CD14-positive monocyte (primary cell): ENCODE measurements at regions of chr7 and their contacts with region 1.

Region 1: DNA sequence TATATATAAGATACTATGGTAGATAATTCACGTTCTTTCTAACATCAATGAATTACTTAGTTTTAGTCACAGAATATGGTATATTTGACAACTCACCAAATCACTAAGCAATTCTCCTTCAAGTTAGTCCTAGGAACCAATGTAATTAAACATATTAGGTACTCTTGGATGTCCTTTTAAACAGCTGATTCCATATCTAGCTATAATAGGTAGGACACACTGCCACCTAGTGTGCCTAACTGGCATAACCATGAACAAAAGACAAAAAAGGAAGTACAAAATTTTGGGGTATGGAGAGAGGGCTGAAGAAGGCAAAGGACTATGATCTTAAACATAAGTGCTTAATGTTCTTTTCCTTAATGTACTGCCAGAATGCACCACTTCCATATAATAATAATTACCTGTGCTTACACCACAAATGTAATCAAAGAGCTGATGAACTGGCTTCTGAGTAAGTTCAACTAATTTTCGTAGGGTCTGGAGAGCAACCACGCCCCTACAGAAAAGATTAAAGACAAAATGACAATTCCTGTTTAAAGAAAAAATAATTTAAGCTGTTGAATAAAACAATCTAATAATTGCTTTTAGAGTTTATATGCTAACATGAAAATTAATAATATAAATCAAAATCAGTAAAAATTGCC is 28.7 kb downstream of the PNPLA8 start:
- DNase-seq: peak; percentile 40 to 57 (median 54)
- H3K4me3 ChIP-seq: no peak overlapping the region
- H3K4me3 Mint-ChIP-seq: no peak overlapping the region
- H3K27ac ChIP-seq: no peak overlapping the region
- H3K27ac Mint-ChIP-seq: no peak overlapping the region
- H3K4me1 ChIP-seq: no peaks in the 10 kb centered on the region
- H3K4me1 Mint-ChIP-seq: no peaks in the 10 kb centered on the region
- H3K27me3 ChIP-seq: no peaks in the 10 kb centered on the region
- H3K27me3 Mint-ChIP-seq: no peaks in the 10 kb centered on the region
- CTCF ChIP-seq: peak; percentile 95

Region 2: GRCh38 chr7:107262857-107263256 is 1234.3 kb before region 1 on chr7:
- intact Hi-C with region 1: no loop called
- DNase-seq: no peak
- H3K4me3 ChIP-seq: no peak overlapping the region
- H3K4me3 Mint-ChIP-seq: no peak overlapping the region
- H3K27ac ChIP-seq: no peak overlapping the region
- H3K27ac Mint-ChIP-seq: peak overlapping the region in 1 of 7 donors; percentile 43
- H3K4me1 ChIP-seq: no peaks in the 10 kb centered on the region
- H3K4me1 Mint-ChIP-seq: no peaks in the 10 kb centered on the region
- H3K27me3 ChIP-seq: no peaks in the 10 kb centered on the region
- H3K27me3 Mint-ChIP-seq: peaks cover 0 to 2% (median 0%) of the 10 kb centered on the region in 3 donors
- CTCF ChIP-seq: no peak

Region 3: GRCh38 chr7:108181073-108181985 is 315.9 kb before region 1 on chr7:
- intact Hi-C with region 1: loop called in 1 of 2 experiments (anchors 5 kb)
- DNase-seq: peak; percentile 5 to 30 (median 10)
- H3K4me3 ChIP-seq: no peak overlapping the region
- H3K4me3 Mint-ChIP-seq: no peak overlapping the region
- H3K27ac ChIP-seq: no peak overlapping the region
- H3K27ac Mint-ChIP-seq: no peak overlapping the region
- H3K4me1 ChIP-seq: no peaks in the 10 kb centered on the region
- H3K4me1 Mint-ChIP-seq: no peaks in the 10 kb centered on the region
- H3K27me3 ChIP-seq: no peaks in the 10 kb centered on the region
- H3K27me3 Mint-ChIP-seq: peaks cover 2 to 7% (median 4%) of the 10 kb centered on the region in 3 donors
- CTCF ChIP-seq: peak; percentile 82

Region 4: DNA sequence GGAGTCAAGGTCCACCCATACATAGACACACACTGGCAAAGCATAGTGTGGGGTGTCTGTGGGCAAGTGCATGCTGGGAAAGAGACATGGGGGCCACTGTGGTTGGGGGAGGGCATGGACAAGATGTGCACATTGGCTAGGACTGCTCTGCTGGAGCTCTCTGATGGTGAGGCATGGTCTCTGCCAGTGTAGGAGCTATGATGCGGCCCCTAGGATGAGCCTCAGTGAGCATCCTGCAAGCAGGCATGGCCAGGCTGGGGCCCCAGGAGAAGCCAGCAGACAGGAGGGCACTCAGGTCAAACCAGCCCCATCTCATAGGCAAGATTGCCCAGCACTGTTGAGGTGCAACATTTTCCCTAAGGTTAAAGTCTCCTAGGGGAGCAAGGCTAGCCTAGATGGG is 561.9 kb after region 1 on chr7:
- intact Hi-C with region 1: no loop called
- DNase-seq: no peak
- H3K4me3 ChIP-seq: no peak overlapping the region
- H3K4me3 Mint-ChIP-seq: no peak overlapping the region
- H3K27ac ChIP-seq: no peak overlapping the region
- H3K27ac Mint-ChIP-seq: no peak overlapping the region
- H3K4me1 ChIP-seq: no peaks in the 10 kb centered on the region
- H3K4me1 Mint-ChIP-seq: no peaks in the 10 kb centered on the region
- H3K27me3 ChIP-seq: no peaks in the 10 kb centered on the region
- H3K27me3 Mint-ChIP-seq: no peaks in the 10 kb centered on the region
- CTCF ChIP-seq: no peak